ENCODE measurements at regions of chr5 and their contacts with region 1.

Region 1: GRCh38 chr5:54415896-54416601 is 39.5 kb upstream of the HSPB3 start:
- DNase-seq: no peak
- ATAC-seq: no peak
- H3K4me3 Mint-ChIP-seq: no peak overlapping the region
- H3K27ac Mint-ChIP-seq: no peak overlapping the region
- H3K4me1 Mint-ChIP-seq: peaks cover 16% of the 10 kb centered on the region
- H3K27me3 Mint-ChIP-seq: no peaks in the 10 kb centered on the region
- CTCF ChIP-seq: no peak

Region 2: DNA sequence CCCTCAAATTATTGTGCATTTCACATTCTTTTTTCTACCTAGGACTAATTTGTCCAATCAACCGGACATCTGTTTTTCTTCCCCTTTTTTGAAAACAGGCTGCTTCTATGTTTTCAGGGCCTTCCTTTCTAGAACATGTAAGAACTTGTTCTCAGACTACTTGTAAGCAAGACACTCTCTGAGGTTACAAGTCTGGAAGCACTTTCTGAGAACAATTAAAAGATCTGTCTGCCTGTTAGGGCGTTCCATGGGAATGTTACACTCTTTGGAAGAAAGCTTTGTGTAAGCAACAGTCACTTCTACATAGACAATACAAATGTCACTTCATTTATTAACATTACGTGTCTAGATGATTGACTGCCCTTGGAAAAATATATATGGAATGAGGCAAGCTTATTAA is 11.5 kb before region 1 on chr5:
- CTCF ChIA-PET with region 1: interaction called, 23 read pairs
- POLR2A ChIA-PET with region 1: interaction called, 5 read pairs
- DNase-seq: no peak
- ATAC-seq: no peak
- H3K4me3 Mint-ChIP-seq: no peak overlapping the region
- H3K27ac Mint-ChIP-seq: peak overlapping the region; percentile 14
- H3K4me1 Mint-ChIP-seq: peaks cover 24% of the 10 kb centered on the region
- H3K27me3 Mint-ChIP-seq: no peaks in the 10 kb centered on the region
- CTCF ChIP-seq: no peak

Measured in WTC11 (cell line).